Tibial artery (tissue), 4 donors: ENCODE measurements at regions of chr11 and their contacts with region 1.

Region 1: DNA sequence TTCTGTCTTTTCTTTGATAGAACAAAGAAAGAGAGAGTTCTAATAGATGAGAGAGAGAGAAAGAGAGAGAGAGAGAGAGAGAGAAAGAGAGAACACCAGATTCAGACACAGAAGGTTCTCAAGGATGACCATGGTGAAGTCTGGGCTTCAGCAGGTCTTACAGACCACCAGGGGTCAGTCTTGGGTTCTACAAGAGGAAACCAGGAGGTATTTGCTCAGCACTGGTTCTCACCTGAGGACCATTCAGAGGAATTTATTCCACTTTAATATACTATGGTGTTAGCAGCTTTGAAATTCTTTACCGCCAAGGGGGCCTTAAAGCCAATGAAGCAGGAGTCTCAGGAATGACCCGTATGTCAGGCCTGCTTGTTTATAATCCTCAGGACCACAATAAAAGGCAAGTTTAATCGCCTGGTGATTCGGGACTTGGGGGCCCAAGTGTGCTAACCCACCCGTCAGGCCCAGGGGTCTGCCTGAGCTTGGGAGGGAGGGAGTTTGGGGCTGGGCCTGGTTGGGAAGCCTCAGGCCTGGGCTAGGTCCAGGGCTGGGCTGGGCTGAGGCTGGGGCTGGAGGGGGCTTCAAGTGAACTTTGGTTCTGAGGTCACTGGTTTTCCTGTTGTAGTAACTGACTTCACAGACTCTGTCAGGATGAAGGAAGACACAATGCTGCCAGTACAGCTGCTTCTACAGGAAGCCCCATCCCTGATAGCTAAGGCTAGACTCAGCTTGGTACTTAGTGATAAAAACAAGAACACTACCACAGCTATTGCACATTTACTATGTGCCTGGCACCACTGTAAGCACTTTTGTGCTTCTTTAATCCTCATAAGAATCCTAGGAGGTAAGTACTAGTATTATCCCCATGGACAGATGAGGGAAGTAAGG is 179.2 kb upstream of the ZBED5 start:
- DNase-seq: no peak
- H3K4me3 ChIP-seq: no peak overlapping the region
- H3K27ac ChIP-seq: peak overlapping the region; percentile 70 to 76
- H3K4me1 ChIP-seq: peaks cover 0 to 29% (median 12%) of the 10 kb centered on the region in 4 donors
- H3K27me3 ChIP-seq: no peaks in the 10 kb centered on the region
- CTCF ChIP-seq: peak; percentile 74 to 79

Region 2: GRCh38 chr11:11265994-11266606 is 229.0 kb after region 1 on chr11:
- intact Hi-C with region 1: loop called (anchors 5 kb)
- DNase-seq: no peak
- H3K4me3 ChIP-seq: no peak overlapping the region
- H3K27ac ChIP-seq: no peak overlapping the region
- H3K4me1 ChIP-seq: peaks cover 0 to 14% (median 8%) of the 10 kb centered on the region in 4 donors
- H3K27me3 ChIP-seq: no peaks in the 10 kb centered on the region
- CTCF ChIP-seq: peak; percentile 68 to 75